Cardiac septum (tissue), 1 donor: ENCODE measurements at regions of chr9 and their contacts with region 1.

Region 1: DNA sequence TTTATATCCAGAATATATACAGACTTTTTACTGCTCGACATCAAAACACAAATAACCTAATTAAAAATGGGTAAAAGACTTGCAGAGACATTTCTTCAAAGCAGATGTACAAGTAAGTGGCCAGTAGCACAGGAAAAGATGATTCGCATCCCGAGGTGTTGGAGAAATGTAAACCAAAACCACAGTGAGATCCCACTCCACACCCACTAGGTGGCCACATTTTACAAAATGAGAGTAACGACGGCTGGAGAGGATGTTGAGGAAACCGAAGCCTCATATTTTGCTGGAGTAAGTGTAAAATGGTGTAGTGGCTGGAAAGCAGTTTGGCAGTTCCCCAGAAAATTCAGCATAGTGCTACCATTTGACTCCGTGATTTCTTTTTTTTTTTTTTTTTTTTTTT is 21.2 kb upstream of the GBGT1 start:
- DNase-seq: no peak

Region 2: GRCh38 chr9:133276001-133276884 is 91.3 kb after region 1 on chr9:
- intact Hi-C with region 1: loop called (anchors 2 kb)
- DNase-seq: no peak

Region 3: GRCh38 chr9:133335878-133336811 is 151.2 kb after region 1 on chr9 and contains the start of gene SURF6:
- intact Hi-C with region 1: loop called (anchors 5 kb)
- DNase-seq: peak; percentile 95
- total RNA-seq, gene SURF6: 14.2 TPM

Region 4: GRCh38 chr9:133485361-133486260 is 300.6 kb after region 1 on chr9:
- intact Hi-C with region 1: loop called (anchors 5 kb)
- DNase-seq: no peak